Activated CD4-positive, alpha-beta memory T cell treated with anti-CD3 and anti-CD28 coated beads, Interleukin-2, amount 10 ng/mL, durations not matched to agents 7 days and 5 days (primary cell): ENCODE measurements at regions of chr17 and their contacts with region 1.

Region 1: GRCh38 chr17:68205251-68205807 is 42.5 kb upstream of the AMZ2 start:
- DNase-seq: peak; percentile 93
- H3K4me3 Mint-ChIP-seq: peak overlapping the region; percentile 83
- H3K27ac Mint-ChIP-seq: peak overlapping the region; percentile 87
- H3K4me1 Mint-ChIP-seq: peaks cover 33% of the 10 kb centered on the region
- H3K27me3 Mint-ChIP-seq: peaks cover 2% of the 10 kb centered on the region

Region 2: GRCh38 chr17:68172461-68172954 is 32.8 kb before region 1 on chr17:
- CTCF ChIA-PET with region 1: interaction called, 59 read pairs
- POLR2A ChIA-PET with region 1: interaction called, 11 read pairs
- DNase-seq: peak; percentile 81
- H3K4me3 Mint-ChIP-seq: no peak overlapping the region
- H3K27ac Mint-ChIP-seq: no peak overlapping the region
- H3K4me1 Mint-ChIP-seq: peaks cover 27% of the 10 kb centered on the region
- H3K27me3 Mint-ChIP-seq: no peaks in the 10 kb centered on the region

Region 3: DNA sequence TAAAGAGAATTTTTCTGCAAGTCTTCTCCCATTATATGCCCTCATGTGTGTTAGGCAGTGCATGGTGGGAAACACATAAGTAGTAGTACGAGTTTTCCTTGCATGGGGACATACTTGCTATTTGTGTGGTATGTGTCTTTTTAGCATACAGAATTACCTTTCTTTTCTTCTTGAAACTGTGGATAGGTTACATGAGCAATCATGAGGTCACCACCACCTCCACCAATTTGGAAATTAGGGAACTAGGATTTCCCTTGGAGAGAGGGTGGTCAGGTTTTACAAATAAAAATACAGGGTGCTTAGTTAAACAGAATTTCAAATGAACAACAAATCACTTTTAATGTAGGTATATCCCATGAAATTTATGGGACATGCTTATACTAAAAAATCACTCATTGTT is 26.2 kb after region 1 on chr17:
- CTCF ChIA-PET with region 1: interaction called, 10 read pairs
- POLR2A ChIA-PET with region 1: interaction called, 29 read pairs
- DNase-seq: no peak
- H3K4me3 Mint-ChIP-seq: no peak overlapping the region
- H3K27ac Mint-ChIP-seq: no peak overlapping the region
- H3K4me1 Mint-ChIP-seq: peaks cover 51% of the 10 kb centered on the region
- H3K27me3 Mint-ChIP-seq: no peaks in the 10 kb centered on the region

Region 4: GRCh38 chr17:68238164-68238872 is 33.0 kb after region 1 on chr17:
- CTCF ChIA-PET with region 1: interaction called, 10 read pairs
- POLR2A ChIA-PET with region 1: interaction called, 29 read pairs
- DNase-seq: no peak
- H3K4me3 Mint-ChIP-seq: peak overlapping the region; percentile 70
- H3K27ac Mint-ChIP-seq: peak overlapping the region; percentile 97
- H3K4me1 Mint-ChIP-seq: peaks cover 63% of the 10 kb centered on the region
- H3K27me3 Mint-ChIP-seq: no peaks in the 10 kb centered on the region

Region 5: DNA sequence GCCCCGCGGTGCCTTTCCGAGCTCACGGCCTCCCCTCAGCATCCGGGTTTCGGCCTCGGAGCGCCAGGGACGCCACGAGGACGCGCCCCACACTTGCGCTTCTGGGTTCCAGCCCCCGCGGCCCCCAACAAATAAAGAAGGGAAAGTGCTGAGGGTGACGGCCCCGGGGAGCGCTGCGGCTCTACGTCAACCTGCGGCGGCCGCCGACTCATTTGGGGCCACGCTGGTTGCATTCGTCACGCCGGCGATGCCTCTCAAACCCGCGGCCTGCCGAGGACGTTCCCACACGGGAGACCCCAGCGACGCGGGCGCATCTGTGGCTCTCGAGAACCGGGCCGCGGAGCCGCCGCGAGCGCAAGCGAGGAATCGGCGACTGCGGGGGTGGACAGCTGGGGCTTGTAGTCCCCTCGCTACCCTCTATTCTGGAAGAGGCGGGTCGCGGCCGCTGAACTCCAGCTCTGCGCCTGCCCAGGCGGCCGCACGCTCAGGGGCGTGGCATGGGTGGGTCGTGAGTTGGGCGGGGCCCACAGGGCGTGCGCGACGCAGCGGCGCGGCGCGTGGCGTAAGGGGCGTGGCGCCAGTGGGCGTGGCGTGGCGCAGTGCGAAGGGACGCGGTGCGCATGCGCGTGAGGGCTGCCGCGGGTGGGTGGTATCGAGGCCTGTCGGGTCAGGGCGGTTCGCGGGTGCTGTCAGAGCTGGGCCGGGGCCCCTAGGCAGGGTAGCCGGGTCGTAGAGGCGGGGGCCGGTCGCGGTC is 42.3 kb after region 1 on chr17 and contains the start of gene AMZ2:
- CTCF ChIA-PET with region 1: interaction called, 23 read pairs
- POLR2A ChIA-PET with region 1: interaction called, 73 read pairs
- DNase-seq: peak; percentile 97
- H3K4me3 Mint-ChIP-seq: peak within 1 kb of the TSS; percentile 85
- H3K27ac Mint-ChIP-seq: peak within 1 kb of the TSS; percentile 90
- H3K4me1 Mint-ChIP-seq: peaks cover 42% of the 10 kb centered on the region
- H3K27me3 Mint-ChIP-seq: no peaks in the 10 kb centered on the region
- total RNA-seq, gene AMZ2: 106 to 121 TPM

Region 6: GRCh38 chr17:68435876-68436842 is 230.8 kb after region 1 on chr17:
- CTCF ChIA-PET with region 1: interaction called, 20 read pairs
- POLR2A ChIA-PET with region 1: interaction called, 15 read pairs
- DNase-seq: peak; percentile 89
- H3K4me3 Mint-ChIP-seq: peak overlapping the region; percentile 60
- H3K27ac Mint-ChIP-seq: peak overlapping the region; percentile 90
- H3K4me1 Mint-ChIP-seq: peaks cover 67% of the 10 kb centered on the region
- H3K27me3 Mint-ChIP-seq: no peaks in the 10 kb centered on the region